ENCODE measurements at regions of chr12 and their contacts with region 1.

Region 1: DNA sequence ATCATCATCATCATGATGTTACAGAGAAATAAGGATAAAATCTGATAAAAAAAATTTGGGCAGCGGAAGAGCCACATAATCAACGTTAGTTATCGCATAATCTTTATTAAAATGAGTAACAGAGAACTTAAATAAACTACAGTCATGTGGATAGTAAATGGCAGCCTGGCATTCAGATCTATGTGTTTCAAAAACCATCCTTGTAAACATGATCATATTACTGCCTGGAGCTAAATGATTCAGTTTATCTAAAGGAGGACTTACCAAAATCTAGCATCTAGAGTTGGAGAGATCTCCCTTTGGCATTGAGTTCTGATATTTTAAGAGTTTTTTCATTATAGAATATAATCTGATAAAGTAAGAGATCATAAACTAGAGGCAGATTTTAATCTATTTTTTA is 200.1 kb upstream of the MGAT4C start:
- DNase-seq: no peak
- H3K4me3 Mint-ChIP-seq: no peak overlapping the region
- H3K27ac Mint-ChIP-seq: no peak overlapping the region
- H3K4me1 Mint-ChIP-seq: no peaks in the 10 kb centered on the region
- H3K27me3 Mint-ChIP-seq: no peaks in the 10 kb centered on the region
- CTCF ChIP-seq: no peak

Region 2: DNA sequence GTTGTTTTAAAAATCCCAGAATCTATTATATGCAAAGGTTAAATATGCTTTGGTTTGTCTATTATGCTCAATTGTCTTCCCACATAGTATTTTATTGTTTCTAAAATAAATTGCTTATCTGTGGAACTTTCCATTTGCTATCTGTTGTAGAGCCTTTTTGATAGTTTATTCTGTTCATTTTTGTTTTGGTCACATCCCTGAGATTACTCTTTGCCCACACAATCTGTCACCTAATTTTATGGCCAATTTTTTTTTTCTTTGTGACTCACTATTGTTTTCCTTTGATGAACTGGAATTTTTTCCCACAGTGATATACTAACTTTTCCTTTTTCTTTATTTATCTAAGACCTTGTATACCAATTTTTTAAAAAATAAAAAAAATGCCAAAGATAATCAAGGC is 681.2 kb before region 1 on chr12:
- CTCF ChIA-PET with region 1: no interaction called
- intact Hi-C with region 1: no loop called
- DNase-seq: no peak
- H3K4me3 Mint-ChIP-seq: no peak overlapping the region
- H3K27ac Mint-ChIP-seq: no peak overlapping the region
- H3K4me1 Mint-ChIP-seq: peaks cover 13% of the 10 kb centered on the region
- H3K27me3 Mint-ChIP-seq: no peaks in the 10 kb centered on the region
- CTCF ChIP-seq: no peak

Region 3: DNA sequence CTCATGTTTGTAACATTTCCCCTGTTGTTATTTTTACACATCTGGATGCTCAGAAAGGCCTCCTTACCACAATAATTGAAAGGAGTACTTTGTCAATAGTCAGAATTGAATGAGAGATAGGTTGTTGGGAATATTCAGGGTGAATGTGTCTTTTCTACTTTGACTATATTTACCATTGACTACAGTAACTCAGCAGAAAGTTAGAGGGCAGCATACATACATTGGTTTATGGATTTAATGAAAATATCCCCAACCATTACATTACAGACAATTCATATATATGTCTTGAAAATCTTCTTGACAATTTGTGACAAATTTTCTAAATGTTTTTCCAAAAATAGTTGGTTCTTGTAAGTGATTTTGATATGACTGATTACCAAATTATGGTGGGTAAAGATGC is 484.4 kb before region 1 on chr12:
- CTCF ChIA-PET with region 1: no interaction called
- intact Hi-C with region 1: loop called (anchors 10 kb)
- DNase-seq: no peak
- H3K4me3 Mint-ChIP-seq: no peak overlapping the region
- H3K27ac Mint-ChIP-seq: no peak overlapping the region
- H3K4me1 Mint-ChIP-seq: no peaks in the 10 kb centered on the region
- H3K27me3 Mint-ChIP-seq: no peaks in the 10 kb centered on the region
- CTCF ChIP-seq: no peak

Region 4: GRCh38 chr12:86186449-86186848 is 269.8 kb before region 1 on chr12:
- CTCF ChIA-PET with region 1: no interaction called
- intact Hi-C with region 1: no loop called
- DNase-seq: peak; percentile 14
- H3K4me3 Mint-ChIP-seq: no peak overlapping the region
- H3K27ac Mint-ChIP-seq: no peak overlapping the region
- H3K4me1 Mint-ChIP-seq: no peaks in the 10 kb centered on the region
- H3K27me3 Mint-ChIP-seq: no peaks in the 10 kb centered on the region
- CTCF ChIP-seq: no peak

Region 5: DNA sequence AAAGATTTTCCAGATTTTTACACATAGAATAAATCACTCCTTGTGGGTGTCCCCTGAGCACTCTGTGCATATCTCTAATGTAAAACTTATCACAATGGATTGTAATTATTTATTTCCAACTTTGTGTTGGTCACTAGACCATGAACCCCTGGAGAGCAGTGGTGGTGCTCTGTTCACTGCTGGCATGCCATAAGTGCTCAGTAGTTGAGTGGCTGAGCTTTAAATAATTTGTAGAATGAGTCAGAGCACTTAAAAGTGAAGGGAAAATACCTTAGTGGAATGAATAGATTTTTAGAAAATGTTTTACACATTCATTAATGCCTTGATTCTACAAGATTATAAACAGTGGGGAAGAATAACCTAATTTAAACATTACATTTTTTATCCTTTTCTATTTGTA is 206.4 kb before region 1 on chr12:
- CTCF ChIA-PET with region 1: no interaction called
- intact Hi-C with region 1: no loop called
- DNase-seq: no peak
- H3K4me3 Mint-ChIP-seq: no peak overlapping the region
- H3K27ac Mint-ChIP-seq: no peak overlapping the region
- H3K4me1 Mint-ChIP-seq: peaks cover 6% of the 10 kb centered on the region
- H3K27me3 Mint-ChIP-seq: no peaks in the 10 kb centered on the region
- CTCF ChIP-seq: no peak

Region 6: GRCh38 chr12:86411710-86412109 is 44.5 kb before region 1 on chr12:
- CTCF ChIA-PET with region 1: no interaction called
- intact Hi-C with region 1: no loop called
- DNase-seq: no peak
- H3K4me3 Mint-ChIP-seq: no peak overlapping the region
- H3K27ac Mint-ChIP-seq: no peak overlapping the region
- H3K4me1 Mint-ChIP-seq: no peaks in the 10 kb centered on the region
- H3K27me3 Mint-ChIP-seq: no peaks in the 10 kb centered on the region
- CTCF ChIP-seq: no peak